ENCODE measurements at regions of chr9 and their contacts with region 1.

Region 1: GRCh38 chr9:6757456-6758247 is at the start of gene KDM4C:
- DNase-seq: peak; percentile 98
- H3K4me3 ChIP-seq: peak within 1 kb of the TSS; percentile 80 to 98 (median 97)
- H3K27ac ChIP-seq: peak within 1 kb of the TSS; percentile 94 to 100 (median 100)
- H3K4me1 ChIP-seq: peaks cover 5 to 32% (median 23%) of the 10 kb centered on the region in 4 donors
- H3K27me3 ChIP-seq: no peaks in the 10 kb centered on the region
- CTCF ChIP-seq: no peak
- EP300 ChIP-seq: peak; percentile 9
- POLR2A ChIP-seq: peak; percentile 75
- total RNA-seq, gene KDM4C: 25.2 to 41.1 (median 26.4) TPM

Region 2: GRCh38 chr9:6015278-6016157 is 742.1 kb before region 1 on chr9 and contains the start of gene RANBP6:
- intact Hi-C with region 1: loop called (anchors 10 kb)
- DNase-seq: peak; percentile 95
- H3K4me3 ChIP-seq: peak within 1 kb of the TSS; percentile 67 to 78 (median 75)
- H3K27ac ChIP-seq: peak within 1 kb of the TSS; percentile 82 to 87 (median 85)
- H3K4me1 ChIP-seq: peaks cover 22 to 45% (median 38%) of the 10 kb centered on the region in 4 donors
- H3K27me3 ChIP-seq: no peaks in the 10 kb centered on the region
- CTCF ChIP-seq: no peak
- EP300 ChIP-seq: no peak
- POLR2A ChIP-seq: peak; percentile 36
- total RNA-seq, gene RANBP6: 10.0 to 13.9 (median 12.1) TPM

Region 3: DNA sequence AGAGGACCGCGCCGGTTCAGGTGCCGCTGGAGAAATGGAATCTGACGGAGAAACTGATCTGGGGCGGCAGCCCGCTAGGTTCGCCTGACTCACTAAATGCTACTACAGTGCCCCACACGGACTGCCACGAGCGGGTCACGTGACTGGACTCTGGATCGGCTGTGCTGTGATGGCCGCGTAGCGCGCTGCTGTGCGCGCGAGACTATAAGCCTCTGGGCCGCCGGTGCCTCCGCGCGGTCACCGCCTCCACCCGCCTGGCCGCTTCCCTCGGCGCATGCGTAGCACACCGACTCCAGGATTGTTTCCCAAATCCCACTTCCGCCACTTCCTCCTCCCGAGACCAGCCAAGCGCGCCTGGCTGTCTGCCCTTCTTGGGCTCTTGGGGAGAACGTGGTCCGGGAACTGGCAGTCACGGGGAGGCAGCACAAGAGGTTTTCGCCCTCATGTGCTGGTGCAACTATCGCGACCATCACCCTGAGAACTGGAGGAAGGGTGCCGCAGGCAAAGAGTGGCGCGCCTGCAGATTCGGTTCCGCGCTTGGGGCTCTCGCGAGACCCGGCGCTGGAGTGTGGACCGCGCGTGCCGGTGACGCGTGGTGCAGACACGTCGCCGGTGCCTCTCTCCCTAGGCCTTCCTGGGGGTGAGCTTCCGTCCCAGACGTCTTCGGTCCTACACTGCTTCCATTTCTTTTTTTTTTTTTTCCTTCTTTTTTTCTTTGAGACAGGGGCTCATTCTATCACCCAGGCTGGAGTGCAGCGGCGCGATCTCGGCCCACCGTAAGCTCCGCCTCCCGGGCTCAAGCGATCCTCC is 76.3 kb before region 1 on chr9:
- intact Hi-C with region 1: loop called (anchors 2 kb)
- DNase-seq: peak; percentile 98
- H3K4me3 ChIP-seq: peak overlapping the region; percentile 73 to 83 (median 75)
- H3K27ac ChIP-seq: peak overlapping the region; percentile 93 to 98 (median 96)
- H3K4me1 ChIP-seq: peaks cover 4 to 21% (median 19%) of the 10 kb centered on the region in 4 donors
- H3K27me3 ChIP-seq: no peaks in the 10 kb centered on the region
- CTCF ChIP-seq: peak in 1 of 3 experiments; percentile 16
- EP300 ChIP-seq: no peak
- POLR2A ChIP-seq: no peak